Heart left ventricle (tissue), 16 donors: ENCODE measurements at regions of chr1 and their contacts with region 1.

Region 1: DNA sequence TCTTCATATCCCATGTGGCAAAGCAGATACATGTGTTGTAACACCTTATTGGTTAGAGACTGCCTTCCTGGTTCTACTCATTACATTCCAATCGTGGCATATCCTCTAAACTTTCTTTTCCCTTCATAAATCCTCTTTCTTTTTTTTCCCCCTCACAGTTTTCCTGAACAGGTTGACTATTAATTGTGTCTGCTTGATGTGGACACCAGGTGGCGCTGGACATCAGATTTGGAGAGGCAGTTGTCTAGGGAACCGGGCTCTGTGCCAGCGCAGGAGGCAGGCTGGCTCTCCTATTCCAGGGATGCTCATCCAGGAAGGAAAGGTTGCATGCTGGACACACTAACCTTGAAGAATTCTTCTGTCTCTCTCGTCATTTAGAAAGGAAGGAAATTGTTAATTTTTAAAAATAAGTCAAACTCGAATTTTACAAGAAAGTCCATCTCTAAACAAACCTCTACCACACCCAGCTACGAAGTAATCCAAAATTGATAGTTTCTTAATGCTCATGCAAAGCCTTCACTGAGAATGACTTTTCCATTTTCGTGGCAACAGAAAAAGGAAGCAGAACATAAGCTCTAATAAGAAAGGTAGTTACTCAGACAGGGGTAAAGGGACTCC is 59.4 kb upstream of the ASB17 start:
- DNase-seq: peak; percentile 84 to 93 (median 87)
- ATAC-seq: peak; percentile 47 to 75 (median 70)
- H3K4me3 ChIP-seq: no peak overlapping the region
- H3K27ac ChIP-seq: no peak overlapping the region
- H3K4me1 ChIP-seq: no peaks in the 10 kb centered on the region
- H3K27me3 ChIP-seq: peaks cover 0 to 17% (median 0%) of the 10 kb centered on the region in 9 donors
- CTCF ChIP-seq: peak; percentile 59 to 85 (median 80)
- POLR2A ChIP-seq: no peak

Region 2: GRCh38 chr1:75953461-75953860 is 38.1 kb before region 1 on chr1:
- intact Hi-C with region 1: no loop called
- DNase-seq: no peak
- ATAC-seq: no peak
- H3K4me3 ChIP-seq: no peak overlapping the region
- H3K27ac ChIP-seq: no peak overlapping the region
- H3K4me1 ChIP-seq: no peaks in the 10 kb centered on the region
- H3K27me3 ChIP-seq: no peaks in the 10 kb centered on the region
- CTCF ChIP-seq: no peak
- POLR2A ChIP-seq: no peak

Region 3: GRCh38 chr1:76059451-76059850 is 67.8 kb after region 1 on chr1:
- intact Hi-C with region 1: no loop called
- DNase-seq: no peak
- ATAC-seq: no peak
- H3K4me3 ChIP-seq: no peak overlapping the region
- H3K27ac ChIP-seq: no peak overlapping the region
- H3K4me1 ChIP-seq: no peaks in the 10 kb centered on the region
- H3K27me3 ChIP-seq: peaks cover 0 to 6% (median 0%) of the 10 kb centered on the region in 9 donors
- CTCF ChIP-seq: no peak
- POLR2A ChIP-seq: no peak

Region 4: GRCh38 chr1:76125473-76126219 is 134.0 kb after region 1 on chr1:
- intact Hi-C with region 1: no loop called
- DNase-seq: no peak
- ATAC-seq: no peak
- H3K4me3 ChIP-seq: no peak overlapping the region
- H3K27ac ChIP-seq: no peak overlapping the region
- H3K4me1 ChIP-seq: peaks cover 0 to 14% (median 2%) of the 10 kb centered on the region in 12 donors
- H3K27me3 ChIP-seq: no peaks in the 10 kb centered on the region
- CTCF ChIP-seq: no peak
- POLR2A ChIP-seq: no peak

Region 5: GRCh38 chr1:76147917-76148316 is 156.3 kb after region 1 on chr1:
- intact Hi-C with region 1: loop called in 4 of 10 experiments (anchors 5 to 10 kb)
- DNase-seq: no peak
- ATAC-seq: peak in 1 of 4 donors; percentile 74
- H3K4me3 ChIP-seq: no peak overlapping the region
- H3K27ac ChIP-seq: no peak overlapping the region
- H3K4me1 ChIP-seq: peaks cover 0 to 5% (median 0%) of the 10 kb centered on the region in 12 donors
- H3K27me3 ChIP-seq: peaks cover 0 to 10% (median 0%) of the 10 kb centered on the region in 9 donors
- CTCF ChIP-seq: no peak
- POLR2A ChIP-seq: no peak

Region 6: GRCh38 chr1:77126307-77126706 is 1134.7 kb after region 1 on chr1:
- intact Hi-C with region 1: loop called in 4 of 10 experiments (anchors 5 to 10 kb)
- DNase-seq: no peak
- ATAC-seq: peak in 3 of 4 donors; percentile 61 to 66 (median 65)
- H3K4me3 ChIP-seq: no peak overlapping the region
- H3K27ac ChIP-seq: no peak overlapping the region
- H3K4me1 ChIP-seq: no peaks in the 10 kb centered on the region
- H3K27me3 ChIP-seq: no peaks in the 10 kb centered on the region
- CTCF ChIP-seq: peak in 11 of 12 donors; percentile 19 to 57 (median 40)
- POLR2A ChIP-seq: no peak

Region 7: GRCh38 chr1:77143529-77144121 is 1152.0 kb after region 1 on chr1:
- intact Hi-C with region 1: loop called in 5 of 10 experiments (anchors 5 to 10 kb)
- DNase-seq: no peak
- ATAC-seq: no peak
- H3K4me3 ChIP-seq: no peak overlapping the region
- H3K27ac ChIP-seq: no peak overlapping the region
- H3K4me1 ChIP-seq: no peaks in the 10 kb centered on the region
- H3K27me3 ChIP-seq: no peaks in the 10 kb centered on the region
- CTCF ChIP-seq: peak in 9 of 12 donors; percentile 14 to 46 (median 31)
- POLR2A ChIP-seq: no peak